ENCODE measurements at regions of chr9 and their contacts with region 1.

Region 1: DNA sequence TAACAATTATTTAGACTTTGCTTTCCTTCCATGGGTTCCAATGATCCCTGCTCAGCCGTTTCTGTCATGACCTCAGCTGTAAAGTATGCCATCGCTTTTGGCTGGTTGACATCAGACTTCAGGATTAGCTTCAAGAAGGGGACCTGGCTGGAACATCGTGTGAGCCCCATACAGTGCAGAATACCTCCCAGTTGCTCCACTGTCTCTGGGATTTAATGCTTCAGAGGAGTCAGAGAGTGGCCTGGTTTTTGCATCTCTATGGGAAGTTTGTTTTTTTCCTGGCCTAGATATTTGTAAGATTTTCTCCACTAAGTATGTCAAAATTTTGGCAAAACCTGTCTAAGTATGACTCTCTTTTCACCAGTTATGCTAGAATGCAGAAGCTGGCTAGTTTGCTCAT is 216.9 kb downstream of the GABBR2 start:
- DNase-seq: peak in 1 of 2 donors; percentile 41
- ATAC-seq: peak; percentile 71 to 98 (median 87)
- H3K4me3 ChIP-seq: no peak overlapping the region
- H3K27ac ChIP-seq: peak overlapping the region in 4 of 10 donors; percentile 10 to 45 (median 42)
- H3K4me1 ChIP-seq: peaks cover 0 to 10% (median 0%) of the 10 kb centered on the region in 9 donors
- H3K27me3 ChIP-seq: no peaks in the 10 kb centered on the region
- CTCF ChIP-seq: no peak

Region 2: GRCh38 chr9:98429613-98430012 is 62.2 kb before region 1 on chr9:
- intact Hi-C with region 1: loop called in 1 of 10 experiments (anchors 10 kb)
- DNase-seq: no peak
- ATAC-seq: peak in 2 of 8 donors; percentile 35 to 40
- H3K4me3 ChIP-seq: no peak overlapping the region
- H3K27ac ChIP-seq: no peak overlapping the region
- H3K4me1 ChIP-seq: peaks cover 0 to 10% (median 0%) of the 10 kb centered on the region in 9 donors
- H3K27me3 ChIP-seq: peaks cover 0 to 3% (median 0%) of the 10 kb centered on the region in 7 donors
- CTCF ChIP-seq: no peak

Region 3: DNA sequence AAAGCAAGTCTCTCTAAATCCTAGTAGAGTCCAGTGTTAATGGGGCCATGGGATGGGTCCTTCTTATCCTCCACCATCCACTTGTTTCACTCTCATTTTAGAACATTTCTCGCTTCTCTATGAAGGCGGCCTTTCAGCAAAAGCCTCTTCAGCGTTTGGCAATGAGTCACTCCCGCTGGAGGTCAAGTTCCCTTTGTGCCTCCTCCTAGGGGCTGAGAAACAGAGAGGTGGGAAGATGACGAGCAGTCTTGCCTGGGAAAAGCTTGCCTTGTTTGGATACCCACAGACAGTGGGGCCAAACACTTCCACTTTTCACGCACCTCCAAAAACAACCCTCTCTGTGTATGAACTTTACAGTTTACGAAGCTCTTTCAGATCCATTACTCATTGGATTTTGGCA is 48.1 kb after region 1 on chr9:
- intact Hi-C with region 1: no loop called
- DNase-seq: no peak
- ATAC-seq: no peak
- H3K4me3 ChIP-seq: no peak overlapping the region
- H3K27ac ChIP-seq: no peak overlapping the region
- H3K4me1 ChIP-seq: no peaks in the 10 kb centered on the region
- H3K27me3 ChIP-seq: peaks cover 0 to 14% (median 0%) of the 10 kb centered on the region in 7 donors
- CTCF ChIP-seq: no peak

Region 4: GRCh38 chr9:98944057-98944733 is 452.4 kb after region 1 on chr9:
- intact Hi-C with region 1: no loop called
- DNase-seq: peak in 1 of 2 donors; percentile 34
- ATAC-seq: peak; percentile 21 to 61 (median 48)
- H3K4me3 ChIP-seq: peak overlapping the region; percentile 54 to 88 (median 74)
- H3K27ac ChIP-seq: peak overlapping the region; percentile 62 to 96 (median 86)
- H3K4me1 ChIP-seq: peaks cover 3 to 87% (median 35%) of the 10 kb centered on the region in 9 donors
- H3K27me3 ChIP-seq: peaks cover 0 to 53% (median 0%) of the 10 kb centered on the region in 7 donors
- CTCF ChIP-seq: no peak

Region 5: GRCh38 chr9:99140685-99141314 is 649.0 kb after region 1 on chr9:
- intact Hi-C with region 1: no loop called
- DNase-seq: peak in 1 of 2 donors; percentile 41
- ATAC-seq: peak; percentile 69 to 89 (median 86)
- H3K4me3 ChIP-seq: no peak overlapping the region
- H3K27ac ChIP-seq: peak overlapping the region in 1 of 10 donors; percentile 21
- H3K4me1 ChIP-seq: peaks cover 0 to 36% (median 17%) of the 10 kb centered on the region in 9 donors
- H3K27me3 ChIP-seq: no peaks in the 10 kb centered on the region
- CTCF ChIP-seq: peak; percentile 76 to 96 (median 86)